ENCODE measurements at regions of chr7 and their contacts with region 1.

Region 1: DNA sequence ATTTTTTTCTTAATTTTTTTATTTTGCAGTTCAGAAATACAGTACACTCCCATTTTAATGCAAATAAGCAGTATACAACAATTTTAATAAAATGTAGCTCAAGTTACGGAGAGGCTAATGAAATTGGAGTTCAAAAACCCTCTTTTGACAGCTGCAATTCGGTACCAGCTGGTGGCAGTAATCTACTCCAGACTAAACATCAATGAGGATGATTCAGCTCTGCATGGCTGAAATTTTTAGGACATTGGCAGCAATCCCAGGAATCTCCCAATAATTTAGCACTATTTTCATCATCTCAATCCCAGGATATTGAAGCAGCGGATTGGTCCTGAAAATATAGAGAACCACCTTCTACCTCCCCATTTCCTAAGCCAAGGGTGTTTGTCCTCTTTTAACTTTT is 278.8 kb downstream of the CACNA2D1 start:
- DNase-seq: peak in 2 of 10 donors; percentile 34 to 48
- H3K4me3 ChIP-seq: peak overlapping the region in 25 of 59 donors; percentile 0 to 43 (median 20)
- H3K27ac ChIP-seq: peak overlapping the region in 57 of 59 donors; percentile 39 to 94 (median 86)
- H3K27me3 ChIP-seq: no peaks in the 10 kb centered on the region
- CTCF ChIP-seq: peak; percentile 18 to 79 (median 60)

Region 2: GRCh38 chr7:82057476-82057875 is 107.3 kb before region 1 on chr7:
- intact Hi-C with region 1: loop called in 1 of 2 experiments (anchors 5 kb)
- DNase-seq: no peak
- H3K4me3 ChIP-seq: no peak overlapping the region
- H3K27ac ChIP-seq: no peak overlapping the region
- H3K27me3 ChIP-seq: no peaks in the 10 kb centered on the region
- CTCF ChIP-seq: no peak

Region 3: GRCh38 chr7:82221152-82221674 is 56.4 kb after region 1 on chr7:
- intact Hi-C with region 1: loop called in 1 of 2 experiments (anchors 10 kb)
- DNase-seq: no peak
- H3K4me3 ChIP-seq: no peak overlapping the region
- H3K27ac ChIP-seq: no peak overlapping the region
- H3K27me3 ChIP-seq: no peaks in the 10 kb centered on the region
- CTCF ChIP-seq: no peak

Region 4: DNA sequence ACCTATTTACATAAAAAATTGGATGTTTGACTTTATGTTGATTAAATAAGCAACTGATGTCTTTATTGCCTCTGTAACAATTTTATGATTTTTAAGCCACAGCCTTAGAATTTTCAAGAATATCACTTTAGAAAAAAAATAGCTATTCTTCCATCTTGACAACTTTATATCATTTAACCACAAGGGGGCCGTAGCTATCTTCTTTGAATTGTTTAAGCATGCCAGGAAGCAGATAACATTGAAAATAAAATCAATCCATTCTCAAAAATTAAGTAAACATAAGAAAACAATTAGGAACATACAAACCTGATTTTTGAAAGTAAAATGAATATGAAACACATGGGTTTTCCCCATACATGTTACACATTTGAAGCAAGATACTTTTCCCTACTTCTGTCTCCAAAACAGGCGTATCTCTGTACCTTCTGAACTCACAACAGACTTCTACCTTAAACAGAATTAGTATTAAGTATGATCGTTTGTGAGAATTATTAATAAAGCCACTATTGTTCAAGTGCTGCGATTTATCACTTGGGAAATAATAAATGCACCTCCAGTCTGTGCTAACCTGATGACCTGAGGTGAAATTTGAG is 69.7 kb after region 1 on chr7:
- intact Hi-C with region 1: loop called (anchors 10 kb)
- DNase-seq: no peak
- H3K4me3 ChIP-seq: no peak overlapping the region
- H3K27ac ChIP-seq: peak overlapping the region in 1 of 59 donors; percentile 23
- H3K27me3 ChIP-seq: no peaks in the 10 kb centered on the region
- CTCF ChIP-seq: peak; percentile 56 to 92 (median 74)

Region 5: DNA sequence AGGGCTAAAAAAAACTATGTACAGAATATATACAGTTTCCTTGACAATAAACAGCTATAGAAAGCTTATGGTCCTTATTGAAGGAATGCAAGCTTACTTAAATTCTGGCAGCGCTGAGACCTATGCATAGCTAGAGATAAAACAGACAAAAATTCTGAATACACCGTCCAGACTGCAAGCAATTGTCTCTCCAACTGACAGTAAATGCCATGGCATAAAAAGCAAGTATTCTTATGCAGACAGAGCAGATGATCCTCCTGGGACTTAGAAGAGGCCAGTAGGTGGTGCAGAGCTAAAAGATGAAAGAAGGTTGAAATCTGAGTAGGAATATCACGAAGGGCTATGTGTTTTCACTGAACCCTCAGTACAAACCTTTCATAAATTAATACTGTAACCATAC is 435.7 kb after region 1 on chr7:
- intact Hi-C with region 1: loop called (anchors 5 to 10 kb)
- DNase-seq: no peak
- H3K4me3 ChIP-seq: peak overlapping the region in 17 of 59 donors; percentile 1 to 47 (median 18)
- H3K27ac ChIP-seq: peak overlapping the region in 55 of 59 donors; percentile 10 to 89 (median 75)
- H3K27me3 ChIP-seq: no peaks in the 10 kb centered on the region
- CTCF ChIP-seq: peak in 8 of 56 donors; percentile 6 to 18 (median 12)